Natural killer cell (primary cell): ENCODE measurements at regions of chr1 and their contacts with region 1.

Region 1: GRCh38 chr1:198937231-198938031 is 298.6 kb downstream of the PTPRC start:
- DNase-seq: peak; percentile 53 to 81
- ATAC-seq: peak; percentile 77 to 92 (median 87)
- H3K4me3 ChIP-seq: peak overlapping the region; percentile 53
- H3K4me3 Mint-ChIP-seq: no peak overlapping the region
- H3K27ac ChIP-seq: peak overlapping the region; percentile 53
- H3K27ac Mint-ChIP-seq: no peak overlapping the region
- H3K4me1 ChIP-seq: peaks cover 4% of the 10 kb centered on the region
- H3K4me1 Mint-ChIP-seq: peaks cover 12 to 21% of the 10 kb centered on the region in 2 donors
- H3K27me3 ChIP-seq: no peaks in the 10 kb centered on the region
- H3K27me3 Mint-ChIP-seq: no peaks in the 10 kb centered on the region
- CTCF ChIP-seq: no peak

Region 2: GRCh38 chr1:198167436-198167934 is 769.9 kb before region 1 on chr1:
- intact Hi-C with region 1: loop called (anchors 10 kb)
- DNase-seq: peak; percentile 37 to 80
- ATAC-seq: peak; percentile 79 to 92 (median 91)
- H3K4me3 ChIP-seq: no peak overlapping the region
- H3K4me3 Mint-ChIP-seq: peak overlapping the region; percentile 88
- H3K27ac ChIP-seq: peak overlapping the region; percentile 81
- H3K27ac Mint-ChIP-seq: peak overlapping the region; percentile 94 to 96
- H3K4me1 ChIP-seq: peaks cover 50% of the 10 kb centered on the region
- H3K4me1 Mint-ChIP-seq: peaks cover 72% of the 10 kb centered on the region in 2 donors
- H3K27me3 ChIP-seq: no peaks in the 10 kb centered on the region
- H3K27me3 Mint-ChIP-seq: no peaks in the 10 kb centered on the region
- CTCF ChIP-seq: no peak

Region 3: GRCh38 chr1:198179556-198179981 is 757.9 kb before region 1 on chr1:
- intact Hi-C with region 1: no loop called
- DNase-seq: peak in 1 of 2 donors; percentile 68
- ATAC-seq: peak; percentile 48 to 72 (median 71)
- H3K4me3 ChIP-seq: no peak overlapping the region
- H3K4me3 Mint-ChIP-seq: peak overlapping the region; percentile 47
- H3K27ac ChIP-seq: peak overlapping the region; percentile 64
- H3K27ac Mint-ChIP-seq: peak overlapping the region; percentile 68 to 77
- H3K4me1 ChIP-seq: peaks cover 6% of the 10 kb centered on the region
- H3K4me1 Mint-ChIP-seq: peaks cover 78 to 79% of the 10 kb centered on the region in 2 donors
- H3K27me3 ChIP-seq: no peaks in the 10 kb centered on the region
- H3K27me3 Mint-ChIP-seq: no peaks in the 10 kb centered on the region
- CTCF ChIP-seq: no peak

Region 4: DNA sequence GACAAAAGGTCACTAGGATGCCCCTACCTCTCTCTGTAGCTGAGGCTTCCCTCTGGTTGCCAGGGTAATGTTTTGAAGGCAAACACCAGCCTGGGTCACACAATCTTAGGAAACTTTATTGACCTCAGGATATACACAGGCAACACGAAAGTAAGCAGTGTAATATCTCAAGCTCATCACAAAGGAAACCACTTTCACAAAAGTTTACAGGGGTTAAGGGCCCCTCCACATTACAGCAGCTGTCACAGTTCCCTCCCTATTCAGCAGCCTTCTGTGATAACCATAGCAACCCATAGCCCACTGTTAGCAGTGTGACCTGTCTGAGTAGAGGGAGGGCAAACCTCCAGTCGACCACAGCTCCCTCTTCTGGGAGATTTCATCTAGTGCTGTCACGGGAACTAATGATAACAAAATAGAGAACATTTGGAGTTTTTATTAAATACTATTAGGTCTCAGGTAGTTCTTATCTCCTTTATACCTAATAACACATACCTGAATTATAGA is 148.8 kb before region 1 on chr1:
- intact Hi-C with region 1: loop called (anchors 5 kb)
- DNase-seq: peak; percentile 53 to 71
- ATAC-seq: peak; percentile 96 to 98 (median 98)
- H3K4me3 ChIP-seq: no peak overlapping the region
- H3K4me3 Mint-ChIP-seq: peak overlapping the region; percentile 18
- H3K27ac ChIP-seq: peak overlapping the region; percentile 81
- H3K27ac Mint-ChIP-seq: peak overlapping the region; percentile 87 to 91
- H3K4me1 ChIP-seq: peaks cover 13% of the 10 kb centered on the region
- H3K4me1 Mint-ChIP-seq: peaks cover 45 to 50% of the 10 kb centered on the region in 2 donors
- H3K27me3 ChIP-seq: no peaks in the 10 kb centered on the region
- H3K27me3 Mint-ChIP-seq: no peaks in the 10 kb centered on the region
- CTCF ChIP-seq: peak; percentile 53

Region 5: GRCh38 chr1:198873696-198874230 is 63.7 kb before region 1 on chr1:
- intact Hi-C with region 1: no loop called
- DNase-seq: no peak
- ATAC-seq: no peak
- H3K4me3 ChIP-seq: no peak overlapping the region
- H3K4me3 Mint-ChIP-seq: no peak overlapping the region
- H3K27ac ChIP-seq: no peak overlapping the region
- H3K27ac Mint-ChIP-seq: peak overlapping the region in 1 of 2 donors; percentile 38
- H3K4me1 ChIP-seq: no peaks in the 10 kb centered on the region
- H3K4me1 Mint-ChIP-seq: peaks cover 32 to 36% of the 10 kb centered on the region in 2 donors
- H3K27me3 ChIP-seq: no peaks in the 10 kb centered on the region
- H3K27me3 Mint-ChIP-seq: no peaks in the 10 kb centered on the region
- CTCF ChIP-seq: no peak

Region 6: GRCh38 chr1:198903203-198903602 is 34.2 kb before region 1 on chr1:
- intact Hi-C with region 1: loop called (anchors 5 kb)
- DNase-seq: no peak
- ATAC-seq: no peak
- H3K4me3 ChIP-seq: no peak overlapping the region
- H3K4me3 Mint-ChIP-seq: no peak overlapping the region
- H3K27ac ChIP-seq: no peak overlapping the region
- H3K27ac Mint-ChIP-seq: peak overlapping the region; percentile 41 to 50
- H3K4me1 ChIP-seq: no peaks in the 10 kb centered on the region
- H3K4me1 Mint-ChIP-seq: peaks cover 61 to 67% of the 10 kb centered on the region in 2 donors
- H3K27me3 ChIP-seq: no peaks in the 10 kb centered on the region
- H3K27me3 Mint-ChIP-seq: no peaks in the 10 kb centered on the region
- CTCF ChIP-seq: no peak

Region 7: GRCh38 chr1:198925567-198925966 is 11.9 kb before region 1 on chr1:
- intact Hi-C with region 1: loop called (anchors 1 kb)
- DNase-seq: no peak
- ATAC-seq: peak in 1 of 3 donors; percentile 30
- H3K4me3 ChIP-seq: no peak overlapping the region
- H3K4me3 Mint-ChIP-seq: no peak overlapping the region
- H3K27ac ChIP-seq: no peak overlapping the region
- H3K27ac Mint-ChIP-seq: peak overlapping the region; percentile 81 to 91
- H3K4me1 ChIP-seq: peaks cover 12% of the 10 kb centered on the region
- H3K4me1 Mint-ChIP-seq: peaks cover 58 to 65% of the 10 kb centered on the region in 2 donors
- H3K27me3 ChIP-seq: no peaks in the 10 kb centered on the region
- H3K27me3 Mint-ChIP-seq: no peaks in the 10 kb centered on the region
- CTCF ChIP-seq: no peak

Region 8: DNA sequence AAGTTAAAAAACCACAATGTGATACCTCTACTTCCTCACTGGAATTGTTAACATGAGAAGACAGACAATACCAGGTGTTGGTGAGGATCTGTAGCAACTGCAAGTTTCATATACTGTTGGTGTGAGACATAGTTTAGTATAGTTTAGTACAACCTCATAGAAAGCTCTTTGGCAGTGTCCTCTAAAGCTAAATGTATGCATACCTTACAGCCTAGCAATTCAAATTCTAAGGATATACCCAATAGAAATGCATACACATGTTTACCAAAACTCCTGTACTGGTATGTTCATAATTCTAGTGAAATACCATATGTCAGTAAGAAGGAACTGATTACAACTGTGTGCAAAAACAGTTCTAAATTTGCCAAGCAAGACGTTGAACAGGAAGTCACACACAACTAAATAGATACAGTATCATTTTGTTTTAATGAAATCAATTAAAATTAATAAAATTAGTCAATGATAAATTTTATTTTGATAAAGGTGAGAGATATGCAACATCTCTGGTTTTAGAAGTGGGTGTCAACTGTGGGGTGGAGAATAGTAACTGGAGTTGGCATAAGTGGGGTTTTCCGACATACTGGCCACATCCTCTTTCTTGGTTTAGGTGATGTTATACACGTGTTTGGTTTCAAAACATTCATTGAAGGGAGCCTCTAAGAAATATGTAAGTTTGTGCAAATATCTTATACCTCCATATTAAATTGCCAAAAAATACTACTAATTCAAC is 152.1 kb after region 1 on chr1:
- intact Hi-C with region 1: loop called (anchors 1 kb)
- DNase-seq: peak; percentile 36 to 83
- ATAC-seq: peak; percentile 94 to 98 (median 96)
- H3K4me3 ChIP-seq: no peak overlapping the region
- H3K4me3 Mint-ChIP-seq: peak overlapping the region; percentile 68
- H3K27ac ChIP-seq: no peak overlapping the region
- H3K27ac Mint-ChIP-seq: peak overlapping the region; percentile 67 to 70
- H3K4me1 ChIP-seq: no peaks in the 10 kb centered on the region
- H3K4me1 Mint-ChIP-seq: peaks cover 33 to 48% of the 10 kb centered on the region in 2 donors
- H3K27me3 ChIP-seq: no peaks in the 10 kb centered on the region
- H3K27me3 Mint-ChIP-seq: peaks cover 0 to 3% of the 10 kb centered on the region in 2 donors
- CTCF ChIP-seq: no peak

Region 9: GRCh38 chr1:199173356-199173755 is 235.9 kb after region 1 on chr1:
- intact Hi-C with region 1: loop called (anchors 1 kb)
- DNase-seq: peak in 1 of 2 donors; percentile 77
- ATAC-seq: peak; percentile 77 to 92 (median 89)
- H3K4me3 ChIP-seq: no peak overlapping the region
- H3K4me3 Mint-ChIP-seq: peak overlapping the region; percentile 49
- H3K27ac ChIP-seq: peak overlapping the region; percentile 90
- H3K27ac Mint-ChIP-seq: peak overlapping the region; percentile 88 to 94
- H3K4me1 ChIP-seq: peaks cover 37% of the 10 kb centered on the region
- H3K4me1 Mint-ChIP-seq: peaks cover 65 to 78% of the 10 kb centered on the region in 2 donors
- H3K27me3 ChIP-seq: no peaks in the 10 kb centered on the region
- H3K27me3 Mint-ChIP-seq: no peaks in the 10 kb centered on the region
- CTCF ChIP-seq: no peak